ENCODE measurements at regions of chr10 and their contacts with region 1.

Region 1: GRCh38 chr10:123582084-123582989 is 83.8 kb upstream of the GPR26 start:
- DNase-seq: peak; percentile 75 to 83
- H3K4me3 ChIP-seq: no peak overlapping the region
- H3K4me3 Mint-ChIP-seq: no peak overlapping the region
- H3K27ac Mint-ChIP-seq: no peak overlapping the region
- H3K4me1 ChIP-seq: no peaks in the 10 kb centered on the region
- H3K4me1 Mint-ChIP-seq: no peaks in the 10 kb centered on the region
- H3K27me3 ChIP-seq: peaks cover 1% of the 10 kb centered on the region
- H3K27me3 Mint-ChIP-seq: peaks cover 16% of the 10 kb centered on the region
- CTCF ChIP-seq: peak; percentile 80 to 96

Region 2: GRCh38 chr10:123635731-123636130 is 53.4 kb after region 1 on chr10:
- CTCF ChIA-PET with region 1: interaction called, 3 read pairs
- POLR2A ChIA-PET with region 1: no interaction called
- intact Hi-C with region 1: loop called (anchors 2 kb)
- DNase-seq: no peak
- H3K4me3 ChIP-seq: no peak overlapping the region
- H3K4me3 Mint-ChIP-seq: no peak overlapping the region
- H3K27ac Mint-ChIP-seq: no peak overlapping the region
- H3K4me1 ChIP-seq: no peaks in the 10 kb centered on the region
- H3K4me1 Mint-ChIP-seq: no peaks in the 10 kb centered on the region
- H3K27me3 ChIP-seq: no peaks in the 10 kb centered on the region
- H3K27me3 Mint-ChIP-seq: peaks cover 11% of the 10 kb centered on the region
- CTCF ChIP-seq: no peak

Region 3: GRCh38 chr10:123642293-123642692 is 60.0 kb after region 1 on chr10:
- CTCF ChIA-PET with region 1: interaction called, 3 read pairs
- POLR2A ChIA-PET with region 1: no interaction called
- intact Hi-C with region 1: loop called (anchors 2 kb)
- DNase-seq: no peak
- H3K4me3 ChIP-seq: no peak overlapping the region
- H3K4me3 Mint-ChIP-seq: no peak overlapping the region
- H3K27ac Mint-ChIP-seq: no peak overlapping the region
- H3K4me1 ChIP-seq: no peaks in the 10 kb centered on the region
- H3K4me1 Mint-ChIP-seq: no peaks in the 10 kb centered on the region
- H3K27me3 ChIP-seq: no peaks in the 10 kb centered on the region
- H3K27me3 Mint-ChIP-seq: peaks cover 16% of the 10 kb centered on the region
- CTCF ChIP-seq: no peak

Region 4: DNA sequence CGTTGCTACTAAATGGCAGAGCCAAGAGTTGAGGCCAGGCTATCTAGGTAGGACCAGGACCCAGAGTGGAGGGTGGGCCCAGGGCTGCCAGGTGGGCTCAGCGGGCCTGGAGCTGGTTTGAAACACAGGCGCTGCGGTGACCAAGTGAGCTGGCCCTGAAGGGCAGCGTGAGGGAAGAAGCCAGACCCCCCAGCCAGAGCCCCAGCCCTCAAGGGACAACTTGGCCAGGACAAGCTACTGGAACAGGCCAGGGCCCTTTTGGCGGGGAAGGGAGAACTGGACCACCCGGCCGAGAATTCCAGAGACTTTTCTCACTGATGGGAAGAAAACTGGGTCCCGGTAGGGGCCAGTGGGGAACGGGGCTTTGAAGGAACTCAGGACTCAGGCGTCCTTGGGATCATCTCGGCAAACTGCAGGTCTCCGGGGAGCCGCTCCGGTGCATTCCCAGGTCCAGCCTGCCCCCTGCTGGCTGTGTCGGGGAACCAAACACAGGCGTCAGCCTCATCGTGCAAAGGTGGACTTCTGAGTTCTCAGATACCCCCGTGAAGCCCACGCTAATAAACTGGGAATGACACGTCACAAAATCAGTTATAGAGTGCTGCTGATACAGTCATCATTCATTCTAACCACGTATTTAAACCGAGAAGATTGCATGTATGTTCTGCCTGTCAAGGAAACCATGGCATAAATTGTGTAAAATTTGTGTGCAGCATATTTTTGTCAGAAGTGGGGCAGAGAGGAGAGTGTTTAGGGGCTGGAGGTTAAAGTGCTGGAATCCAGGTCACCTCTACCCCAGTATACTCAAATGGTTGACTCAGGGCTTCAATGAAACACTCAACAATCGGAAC is 385.3 kb after region 1 on chr10:
- CTCF ChIA-PET with region 1: no interaction called
- POLR2A ChIA-PET with region 1: no interaction called
- intact Hi-C with region 1: loop called (anchors 1 kb)
- DNase-seq: peak; percentile 63 to 82
- H3K4me3 ChIP-seq: no peak overlapping the region
- H3K4me3 Mint-ChIP-seq: no peak overlapping the region
- H3K27ac Mint-ChIP-seq: no peak overlapping the region
- H3K4me1 ChIP-seq: no peaks in the 10 kb centered on the region
- H3K4me1 Mint-ChIP-seq: peaks cover 8% of the 10 kb centered on the region
- H3K27me3 ChIP-seq: no peaks in the 10 kb centered on the region
- H3K27me3 Mint-ChIP-seq: peaks cover 14% of the 10 kb centered on the region
- CTCF ChIP-seq: peak; percentile 92 to 95

Measured in Caco-2 (cell line).